ENCODE measurements at regions of chr19 and their contacts with region 1.

Region 1: DNA sequence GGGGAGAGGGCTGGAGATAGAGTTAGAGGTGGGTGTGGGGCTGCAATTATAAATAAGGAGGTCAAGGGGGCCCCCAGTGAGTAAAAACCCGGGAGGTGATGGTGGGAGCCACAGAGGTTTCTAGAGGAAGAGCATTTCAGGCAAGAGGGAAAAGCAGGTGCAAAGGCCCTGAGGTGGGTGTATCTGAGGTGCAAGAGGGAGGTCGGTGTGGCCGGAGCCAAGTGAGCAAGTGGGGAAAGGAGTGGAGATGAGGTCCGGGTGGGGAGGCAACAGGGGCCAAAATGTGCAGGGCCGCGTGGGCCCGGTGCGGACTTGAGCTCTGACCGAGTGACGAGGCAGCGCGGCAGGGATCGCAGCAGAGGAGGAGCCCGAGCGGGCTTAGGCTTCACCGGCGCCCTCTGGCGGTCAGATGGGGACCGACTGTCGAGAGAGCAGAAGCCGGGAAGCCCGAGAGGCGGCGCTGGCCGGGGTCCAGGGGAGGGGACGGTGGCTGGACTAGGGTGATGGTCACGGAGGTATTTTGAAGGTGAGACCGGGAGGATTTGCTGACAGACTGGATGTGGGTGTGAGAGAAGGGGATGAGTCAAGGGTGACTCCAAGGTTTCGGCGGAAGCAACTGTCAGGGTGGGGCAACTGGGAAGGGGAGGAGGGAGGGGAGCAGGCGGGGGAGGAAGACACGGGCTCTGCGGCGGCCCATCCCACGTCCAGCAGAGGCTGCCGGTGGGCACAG is 17.7 kb upstream of the SPACA4 start:
- DNase-seq: peak; percentile 83 to 98
- H3K4me3 ChIP-seq: no peak overlapping the region
- CTCF ChIP-seq: peak in 2 of 3 donors; percentile 45 to 94
- POLR2A ChIP-seq: no peak

Region 2: DNA sequence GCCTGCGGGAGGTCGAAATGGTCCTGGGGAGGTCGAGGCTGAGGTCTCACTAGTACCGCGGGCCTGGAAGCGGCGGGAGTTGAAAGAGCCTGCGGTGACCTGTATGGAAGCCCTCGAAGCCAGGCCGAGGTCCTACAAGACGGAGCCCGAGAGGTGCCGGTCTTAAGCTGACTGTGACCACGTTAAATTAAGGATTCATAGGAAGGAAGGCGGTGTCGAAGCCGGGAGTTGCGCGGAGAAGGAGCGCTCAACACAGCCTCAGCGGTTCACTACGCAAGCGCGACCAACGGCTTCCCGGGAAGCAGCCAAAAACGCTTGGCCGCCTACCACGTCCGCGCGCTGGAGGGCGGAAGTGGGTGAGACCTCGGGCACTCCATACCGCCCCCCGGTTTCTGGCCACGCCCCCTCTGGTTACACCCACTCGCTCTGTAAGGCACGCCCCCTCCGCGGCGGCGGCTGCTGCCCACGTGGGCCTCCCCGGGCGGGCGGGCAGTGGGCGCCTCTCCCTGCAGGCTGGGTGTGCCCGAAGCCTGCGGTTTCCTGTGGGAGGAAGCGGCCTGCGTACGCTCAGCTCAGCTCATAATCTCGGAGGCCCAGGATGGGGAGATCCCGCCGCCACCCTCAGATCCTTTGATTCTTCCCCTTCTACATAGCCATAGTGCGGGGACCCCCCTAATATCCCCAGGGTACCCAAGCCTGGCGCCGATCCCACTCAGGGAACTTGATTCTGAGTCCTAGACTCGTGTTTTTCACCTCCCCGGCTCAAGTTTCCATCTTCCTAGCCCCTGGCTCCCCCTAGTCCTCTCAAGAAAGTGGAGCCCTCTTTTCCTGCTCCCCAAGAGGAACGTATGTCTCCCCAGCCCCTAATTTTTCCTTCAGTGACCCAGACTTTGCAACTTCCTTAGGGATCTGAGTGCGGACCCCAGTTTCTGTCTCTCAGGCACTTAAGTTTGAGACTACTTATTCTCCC is 266.9 kb before region 1 on chr19:
- intact Hi-C with region 1: loop called (anchors 10 kb)
- DNase-seq: peak; percentile 97 to 100
- H3K4me3 ChIP-seq: peak overlapping the region; percentile 22
- CTCF ChIP-seq: no peak
- POLR2A ChIP-seq: peak in 1 of 2 donors; percentile 61

Region 3: DNA sequence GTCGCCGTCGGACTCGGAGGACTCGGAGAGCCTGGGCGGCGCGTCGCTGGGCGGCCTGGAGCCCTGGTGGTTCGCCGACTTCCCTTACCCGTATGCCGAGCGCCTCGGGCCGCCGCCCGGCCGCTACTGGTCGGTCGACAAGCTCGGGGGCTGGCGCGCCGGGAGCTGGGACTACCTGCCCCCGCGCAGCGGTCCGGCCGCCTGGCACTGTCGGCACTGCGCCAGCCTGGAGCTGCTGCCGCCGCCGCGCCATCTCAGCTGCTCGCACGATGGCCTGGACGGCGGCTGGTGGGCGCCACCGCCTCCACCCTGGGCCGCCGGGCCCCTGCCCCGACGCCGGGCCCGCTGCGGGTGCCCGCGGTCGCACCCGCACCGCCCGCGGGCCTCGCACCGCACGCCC is 145.6 kb before region 1 on chr19:
- intact Hi-C with region 1: loop called (anchors 5 kb)
- DNase-seq: peak in 1 of 2 donors; percentile 78
- H3K4me3 ChIP-seq: no peak overlapping the region
- CTCF ChIP-seq: no peak
- POLR2A ChIP-seq: no peak

Region 4: DNA sequence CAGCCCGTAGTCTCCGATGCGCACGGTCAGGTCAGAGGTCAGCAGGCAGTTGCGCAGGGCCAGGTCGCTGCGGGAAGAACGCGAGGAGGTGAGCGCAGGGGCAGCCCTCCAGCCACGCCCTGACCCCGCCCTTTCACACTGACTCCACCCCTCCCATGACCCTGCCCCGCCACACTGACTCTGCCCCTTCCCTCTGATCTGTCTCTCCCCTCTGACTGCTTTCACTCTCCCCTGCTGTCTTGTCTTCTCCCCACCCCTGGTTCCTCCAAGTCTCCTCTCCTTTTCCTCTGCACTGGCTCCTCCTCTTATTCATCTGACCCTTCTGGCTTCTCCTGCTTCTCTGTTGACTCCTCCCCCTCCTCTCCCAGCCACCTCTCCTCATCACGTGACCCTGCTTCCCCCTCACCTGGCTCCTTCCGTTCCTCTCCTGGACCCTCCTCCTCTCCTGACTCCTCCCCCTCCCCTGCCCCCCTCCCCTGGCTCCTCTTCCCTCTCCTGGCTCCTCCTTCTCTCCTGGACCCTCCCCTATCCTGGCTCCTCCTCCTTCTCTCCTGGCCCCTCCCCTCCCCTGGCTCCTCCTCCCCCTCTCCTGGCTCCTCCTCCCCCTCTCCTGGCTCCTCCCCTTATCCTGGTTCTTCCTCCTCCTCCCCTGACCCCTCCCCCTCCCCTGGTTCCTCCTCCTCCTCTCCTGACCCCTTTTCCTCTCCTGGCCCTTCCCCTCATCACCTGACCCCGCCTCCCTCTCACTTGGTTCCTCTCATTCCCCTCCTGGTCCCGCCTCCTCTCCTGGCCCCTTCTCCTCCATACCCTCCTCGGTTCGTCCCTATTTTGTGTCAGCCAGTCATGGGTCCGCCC is 87.1 kb before region 1 on chr19:
- intact Hi-C with region 1: loop called (anchors 5 kb)
- DNase-seq: peak in 1 of 2 donors; percentile 72
- H3K4me3 ChIP-seq: no peak overlapping the region
- CTCF ChIP-seq: no peak
- POLR2A ChIP-seq: no peak

Region 5: GRCh38 chr19:48530066-48530720 is 58.6 kb before region 1 on chr19:
- intact Hi-C with region 1: no loop called
- DNase-seq: no peak
- H3K4me3 ChIP-seq: no peak overlapping the region
- CTCF ChIP-seq: no peak
- POLR2A ChIP-seq: no peak

Measured in lower leg skin (tissue), 4 donors.